PC-9 (cell line): ENCODE measurements at regions of chr2 and their contacts with region 1.

Region 1: DNA sequence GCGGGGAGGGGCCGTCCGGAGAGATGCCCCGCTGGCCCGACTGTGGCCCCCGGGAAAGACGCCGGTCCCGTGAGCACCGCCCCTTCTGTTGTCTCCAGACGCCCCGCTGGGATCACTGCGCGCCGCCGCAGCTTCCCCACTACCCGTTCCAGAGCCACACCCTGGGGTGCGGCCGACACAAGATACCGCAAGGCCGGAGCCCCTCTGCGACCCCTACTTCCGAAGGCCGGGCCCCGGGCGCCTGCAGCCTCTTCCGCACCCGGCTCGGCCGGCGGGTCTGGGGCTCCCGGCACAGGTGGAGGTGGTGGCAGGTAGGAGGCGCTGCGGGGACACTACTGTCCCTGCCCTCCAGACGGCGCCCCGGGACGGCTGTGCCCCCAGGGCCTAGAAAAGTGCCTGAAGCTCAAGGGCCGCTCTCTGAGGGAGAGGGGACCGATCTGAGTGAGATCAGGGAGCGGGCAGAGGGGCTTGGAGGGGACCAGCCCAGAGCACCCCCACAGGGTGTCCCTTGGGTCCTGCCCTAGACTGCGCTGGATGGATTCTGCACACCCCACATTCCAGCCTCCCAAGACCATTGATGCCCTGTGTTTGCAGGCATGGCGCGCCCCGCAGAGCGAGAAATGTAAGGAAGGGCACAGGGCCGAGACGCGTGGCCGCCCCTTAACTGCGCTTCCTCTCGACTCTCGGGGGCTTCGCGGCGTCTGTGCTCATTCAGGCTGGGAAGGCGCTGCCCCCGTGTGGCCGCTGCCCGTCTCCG is 80.0 kb downstream of the GFPT1 start:
- DNase-seq: peak; percentile 58 to 72
- H3K4me3 ChIP-seq: peak overlapping the region; percentile 73
- H3K27ac ChIP-seq: no peak overlapping the region
- H3K4me1 ChIP-seq: peaks cover 9% of the 10 kb centered on the region; the same call in 1 of the 2 replicates
- H3K27me3 ChIP-seq: peaks cover 17% of the 10 kb centered on the region
- CTCF ChIP-seq: peak; percentile 83

Region 2: GRCh38 chr2:68467077-68467960 is 839.7 kb before region 1 on chr2 and contains the starts of genes APLF and FBXO48:
- CTCF ChIA-PET with region 1: no interaction called
- POLR2A ChIA-PET with region 1: no interaction called
- intact Hi-C with region 1: loop called (anchors 10 kb)
- DNase-seq: peak; percentile 98
- H3K4me3 ChIP-seq: peak within 1 kb of the TSS; percentile 76
- H3K27ac ChIP-seq: peak within 1 kb of the TSS; percentile 48
- H3K4me1 ChIP-seq: peaks cover 17% of the 10 kb centered on the region
- H3K27me3 ChIP-seq: no peaks in the 10 kb centered on the region
- CTCF ChIP-seq: no peak
- total RNA-seq, gene APLF: 3.9 and 4.5 TPM in 2 replicates
- total RNA-seq, gene FBXO48: 1.2 and 1.6 TPM in 2 replicates

Region 3: DNA sequence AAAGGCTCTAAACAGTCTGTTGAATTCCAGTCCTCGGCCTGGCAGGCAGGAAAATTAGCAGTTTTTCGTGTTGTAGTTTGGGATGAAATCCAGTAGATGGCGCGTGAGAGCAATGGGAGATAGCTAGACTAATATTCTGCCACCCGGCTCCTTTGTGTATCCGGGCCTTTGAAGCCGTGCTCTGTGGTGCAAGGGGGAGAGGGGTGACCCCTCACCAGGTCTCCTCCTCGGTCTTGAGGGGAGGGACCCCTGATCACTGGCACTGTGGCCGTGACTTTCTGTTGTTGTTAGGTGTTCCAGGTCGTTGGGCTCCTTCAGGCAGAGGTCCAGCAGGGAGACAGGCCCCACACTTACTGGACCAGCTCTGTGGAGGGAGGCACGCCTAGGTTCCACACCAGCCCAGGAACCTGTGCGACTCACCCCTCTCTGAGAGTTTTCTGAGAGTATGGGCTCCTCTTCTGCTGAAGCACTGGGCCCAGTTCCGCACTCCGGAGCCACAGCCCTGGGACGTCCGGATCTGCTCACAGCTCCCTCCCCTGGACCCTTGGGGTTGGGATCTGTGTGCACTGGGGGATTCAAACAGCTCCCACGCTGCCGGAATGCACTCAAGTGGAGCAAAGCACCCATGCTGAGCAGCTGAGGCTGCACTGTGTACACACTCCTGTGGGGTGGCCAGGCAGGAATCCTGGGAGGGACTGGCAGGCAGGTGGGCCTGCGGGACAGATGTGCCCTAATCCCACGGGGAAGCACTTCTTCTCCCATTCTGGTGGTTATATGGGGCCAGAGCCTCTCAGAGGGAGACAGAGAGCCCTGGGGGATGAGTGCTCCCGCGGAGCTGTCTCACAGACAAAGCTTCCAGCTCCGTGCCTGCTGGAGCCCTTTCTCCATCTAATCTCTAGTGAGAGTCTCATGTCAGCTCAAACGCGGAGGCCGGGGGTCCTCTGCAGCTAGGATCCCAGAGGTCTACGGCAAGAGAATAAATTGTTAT is 363.1 kb before region 1 on chr2:
- CTCF ChIA-PET with region 1: interaction called, 3 read pairs
- POLR2A ChIA-PET with region 1: no interaction called
- intact Hi-C with region 1: loop called (anchors 1 kb)
- DNase-seq: peak; percentile 52 to 57
- H3K4me3 ChIP-seq: no peak overlapping the region
- H3K27ac ChIP-seq: no peak overlapping the region
- H3K4me1 ChIP-seq: no peaks in the 10 kb centered on the region
- H3K27me3 ChIP-seq: no peaks in the 10 kb centered on the region
- CTCF ChIP-seq: peak; percentile 87

Region 4: GRCh38 chr2:69026026-69026425 is 281.0 kb before region 1 on chr2:
- CTCF ChIA-PET with region 1: no interaction called
- POLR2A ChIA-PET with region 1: no interaction called
- intact Hi-C with region 1: loop called (anchors 1 kb)
- DNase-seq: peak in 1 of 2 experiments; percentile 11
- H3K4me3 ChIP-seq: no peak overlapping the region
- H3K27ac ChIP-seq: no peak overlapping the region
- H3K4me1 ChIP-seq: peaks cover 8% of the 10 kb centered on the region; the same call in 1 of the 2 replicates
- H3K27me3 ChIP-seq: no peaks in the 10 kb centered on the region
- CTCF ChIP-seq: peak; percentile 69

Region 5: GRCh38 chr2:69122271-69122670 is 184.7 kb before region 1 on chr2:
- CTCF ChIA-PET with region 1: no interaction called
- POLR2A ChIA-PET with region 1: no interaction called
- intact Hi-C with region 1: no loop called
- DNase-seq: no peak
- H3K4me3 ChIP-seq: no peak overlapping the region
- H3K27ac ChIP-seq: no peak overlapping the region
- H3K4me1 ChIP-seq: no peaks in the 10 kb centered on the region
- H3K27me3 ChIP-seq: no peaks in the 10 kb centered on the region
- CTCF ChIP-seq: no peak

Region 6: DNA sequence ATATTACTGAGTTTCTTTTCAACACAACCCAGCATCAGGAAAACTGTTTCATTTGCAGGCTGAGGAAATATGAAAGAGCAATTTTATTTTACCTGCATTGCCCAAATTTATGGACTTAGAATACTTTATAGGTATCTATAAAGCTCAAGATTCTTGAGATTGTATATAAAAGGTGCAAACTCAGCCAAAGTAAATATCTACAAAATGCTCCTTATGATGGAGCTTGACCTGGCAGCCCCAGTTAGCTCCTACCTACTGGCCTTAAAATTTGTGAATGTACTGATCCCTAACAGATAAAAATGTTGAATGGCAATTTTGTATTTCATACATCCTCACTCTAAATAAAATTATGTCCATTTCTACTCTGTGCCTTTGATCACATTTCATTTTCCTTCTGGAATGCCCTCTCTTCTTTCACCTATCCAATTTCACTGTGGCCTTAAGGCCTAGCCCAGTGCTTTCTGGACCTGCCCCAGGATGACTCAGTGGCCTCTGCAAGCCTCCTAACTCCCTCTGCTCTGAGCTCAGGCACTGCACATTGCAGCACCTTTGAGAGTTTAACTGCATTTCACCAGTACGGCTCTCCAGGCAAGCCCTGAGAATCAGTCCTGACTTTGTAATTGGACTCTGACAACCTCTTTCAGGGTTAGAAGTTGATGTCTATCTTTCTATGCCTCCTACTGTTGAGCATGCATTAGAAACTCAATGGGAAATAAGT is 168.0 kb before region 1 on chr2:
- CTCF ChIA-PET with region 1: no interaction called
- POLR2A ChIA-PET with region 1: no interaction called
- intact Hi-C with region 1: loop called (anchors 5 kb)
- DNase-seq: peak; percentile 70 to 77
- H3K4me3 ChIP-seq: 0 out of 2 replicates have a peak overlapping the region, but pooled peaks have one; percentile 1
- H3K27ac ChIP-seq: peak overlapping the region; percentile 69
- H3K4me1 ChIP-seq: peaks cover 37% of the 10 kb centered on the region
- H3K27me3 ChIP-seq: no peaks in the 10 kb centered on the region
- CTCF ChIP-seq: no peak

Region 7: GRCh38 chr2:69177785-69178636 is 129.0 kb before region 1 on chr2:
- CTCF ChIA-PET with region 1: interaction called, 19 read pairs
- POLR2A ChIA-PET with region 1: no interaction called
- intact Hi-C with region 1: no loop called
- DNase-seq: peak; percentile 68 to 84
- H3K4me3 ChIP-seq: peak overlapping the region; percentile 1; the same call in 1 of the 2 replicates
- H3K27ac ChIP-seq: peak overlapping the region; percentile 55
- H3K4me1 ChIP-seq: peaks cover 15% of the 10 kb centered on the region
- H3K27me3 ChIP-seq: no peaks in the 10 kb centered on the region
- CTCF ChIP-seq: no peak

Region 8: GRCh38 chr2:69893684-69894551 is 586.9 kb after region 1 on chr2 and contains the start of gene SNRNP27:
- CTCF ChIA-PET with region 1: no interaction called
- POLR2A ChIA-PET with region 1: no interaction called
- intact Hi-C with region 1: no loop called
- DNase-seq: peak; percentile 60 to 67
- H3K4me3 ChIP-seq: peak within 1 kb of the TSS; percentile 74
- H3K27ac ChIP-seq: peak within 1 kb of the TSS; percentile 38
- H3K4me1 ChIP-seq: peaks cover 13% of the 10 kb centered on the region
- H3K27me3 ChIP-seq: no peaks in the 10 kb centered on the region
- CTCF ChIP-seq: no peak
- total RNA-seq, gene SNRNP27: 29.9 and 38.1 TPM in 2 replicates